OCI-LY7 (cell line): ENCODE measurements at regions of chr3 and their contacts with region 1.

Region 1: DNA sequence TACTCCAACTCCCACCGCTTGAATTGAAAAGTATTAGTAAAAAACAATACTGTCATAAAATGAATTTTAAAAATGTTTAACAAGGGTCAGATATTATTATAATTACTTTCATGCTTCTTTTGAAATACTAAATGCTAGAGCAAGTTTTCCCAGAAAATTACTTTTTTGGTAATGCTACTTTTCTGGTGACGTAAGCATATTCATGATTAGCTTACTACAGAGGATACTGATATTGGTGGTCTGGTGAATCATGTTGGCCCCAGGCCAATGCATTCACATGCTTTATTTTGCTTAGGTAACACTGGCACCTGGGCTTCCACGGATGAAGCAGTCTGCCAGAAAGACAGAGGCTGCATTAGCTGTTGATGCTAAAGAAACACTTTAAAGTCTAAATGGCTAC is 12.4 kb downstream of the SPATA16 start:
- DNase-seq: no peak
- H3K4me3 ChIP-seq: no peak overlapping the region
- H3K27ac ChIP-seq: no peak overlapping the region
- H3K4me1 ChIP-seq: no peaks in the 10 kb centered on the region
- CTCF ChIP-seq: no peak

Region 2: DNA sequence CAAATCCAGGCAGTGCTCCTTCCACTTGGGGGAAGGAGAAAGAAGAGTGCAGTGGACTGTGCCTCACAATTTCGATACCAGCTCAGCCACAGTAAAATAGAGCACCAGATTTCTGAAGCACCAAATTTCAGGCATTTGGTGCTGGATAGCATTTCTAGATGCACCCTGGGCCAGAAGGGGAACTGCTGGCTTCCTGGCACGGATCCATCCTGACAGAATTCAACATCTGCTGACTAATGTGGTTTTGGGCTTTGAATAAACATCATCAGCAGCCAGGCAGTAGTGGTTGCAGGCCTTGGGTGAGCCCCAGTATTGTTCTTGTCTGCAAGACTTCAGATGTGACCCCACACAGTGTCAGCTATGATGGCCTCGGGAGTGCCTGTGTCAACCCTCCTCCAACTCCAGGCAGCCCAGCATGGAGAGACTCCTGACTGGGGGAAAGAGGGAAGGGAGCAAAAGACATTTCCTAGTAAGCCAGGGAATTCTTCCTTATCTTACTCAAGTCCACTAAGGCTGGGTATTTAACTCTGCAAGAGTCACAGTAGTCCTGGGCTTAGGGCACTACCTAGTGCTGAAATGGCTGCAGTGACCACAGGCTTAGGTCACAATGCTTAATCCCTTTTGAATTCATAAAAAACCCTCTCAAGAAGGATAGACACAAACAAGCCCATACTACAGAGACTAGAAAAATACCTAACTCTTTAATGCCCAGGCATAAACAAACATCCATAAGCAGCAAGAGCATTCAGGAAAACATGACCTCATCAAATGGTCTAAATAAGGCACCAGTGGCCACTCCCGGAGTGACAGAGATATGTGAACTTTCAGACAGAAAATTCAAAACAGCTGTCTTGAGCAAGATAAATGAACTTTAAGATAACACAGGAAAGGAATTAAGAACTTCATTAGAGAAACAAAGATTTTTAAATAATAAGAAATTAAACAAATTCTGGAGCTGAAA is 62.3 kb before region 1 on chr3:
- CTCF ChIA-PET with region 1: no interaction called
- POLR2A ChIA-PET with region 1: no interaction called
- intact Hi-C with region 1: loop called (anchors 10 kb)
- DNase-seq: no peak
- H3K4me3 ChIP-seq: no peak overlapping the region
- H3K27ac ChIP-seq: no peak overlapping the region
- H3K4me1 ChIP-seq: no peaks in the 10 kb centered on the region
- CTCF ChIP-seq: no peak